PC-9 (cell line): ENCODE measurements at regions of chr7 and their contacts with region 1.

Region 1: DNA sequence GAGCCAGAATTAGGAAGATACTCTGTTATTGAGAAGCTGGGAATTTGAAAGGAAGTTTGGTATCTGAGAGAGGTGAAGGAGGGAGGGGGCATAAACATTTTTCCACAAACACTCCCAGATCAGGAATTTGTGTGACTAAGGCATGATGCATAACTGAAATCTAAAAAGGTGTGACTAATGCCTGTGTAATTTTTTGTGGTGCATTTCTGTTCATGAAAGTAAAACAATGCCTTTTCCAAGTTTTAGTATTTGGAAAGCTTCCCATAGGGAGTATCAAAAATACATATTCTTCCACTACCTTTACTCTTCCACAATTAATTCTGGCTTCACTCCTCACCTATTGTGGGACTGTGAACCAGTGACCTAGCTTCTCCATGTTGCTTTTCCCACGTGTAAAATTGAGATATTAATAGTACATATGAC is 56.4 kb upstream of the CAV2 start:
- DNase-seq: peak; percentile 46 to 95
- H3K4me3 ChIP-seq: peak overlapping the region; percentile 65; the same call in 1 of the 2 replicates
- H3K27ac ChIP-seq: peak overlapping the region; percentile 100
- H3K4me1 ChIP-seq: peaks cover 58% of the 10 kb centered on the region
- H3K27me3 ChIP-seq: no peaks in the 10 kb centered on the region
- CTCF ChIP-seq: no peak

Region 2: DNA sequence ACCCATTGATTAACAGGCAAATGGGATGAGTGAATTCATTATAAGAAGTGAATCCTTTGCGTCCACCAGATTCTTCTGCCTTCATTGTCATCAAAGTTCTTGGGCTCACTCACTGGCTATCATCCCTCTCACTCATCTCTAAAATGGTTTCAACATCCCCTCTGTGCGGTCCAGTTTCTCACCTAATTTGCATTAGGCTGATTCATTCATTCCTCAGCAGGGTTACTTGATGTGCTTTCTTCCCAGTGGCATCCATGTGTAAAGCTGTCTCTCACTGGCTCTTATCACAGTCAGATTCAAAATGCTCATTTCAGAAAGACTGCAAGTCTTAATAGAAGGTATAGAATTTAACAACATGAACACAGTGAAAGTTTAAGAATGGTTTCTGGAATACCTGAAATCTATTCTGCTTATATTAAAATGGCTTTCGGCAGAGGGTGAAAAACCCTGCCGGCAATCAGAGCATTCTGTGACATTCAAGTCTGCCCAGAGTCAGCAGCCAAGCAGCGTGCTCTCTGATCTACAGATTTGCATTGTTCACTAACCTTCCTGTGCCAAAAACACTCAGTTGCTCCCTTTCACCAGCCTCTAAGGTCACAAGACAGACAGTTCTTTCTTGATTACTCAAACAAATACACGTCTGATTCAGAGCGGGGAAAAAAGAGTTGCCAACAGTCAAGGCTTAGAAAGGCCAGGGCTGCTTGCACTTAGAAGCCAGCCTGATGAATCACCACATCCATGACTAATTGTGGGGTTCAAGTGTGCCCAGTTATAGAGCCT is 126.1 kb before region 1 on chr7:
- CTCF ChIA-PET with region 1: no interaction called
- POLR2A ChIA-PET with region 1: interaction called, 13 read pairs
- intact Hi-C with region 1: loop called (anchors 1 kb)
- DNase-seq: peak; percentile 76 to 97
- H3K4me3 ChIP-seq: peak overlapping the region; percentile 29; the same call in 1 of the 2 replicates
- H3K27ac ChIP-seq: peak overlapping the region; percentile 88
- H3K4me1 ChIP-seq: peaks cover 31% of the 10 kb centered on the region
- H3K27me3 ChIP-seq: no peaks in the 10 kb centered on the region
- CTCF ChIP-seq: no peak

Region 3: GRCh38 chr7:116426428-116427156 is 16.5 kb before region 1 on chr7:
- CTCF ChIA-PET with region 1: no interaction called
- POLR2A ChIA-PET with region 1: interaction called, 9 read pairs
- intact Hi-C with region 1: loop called (anchors 1 kb)
- DNase-seq: peak; percentile 56 to 91
- H3K4me3 ChIP-seq: no peak overlapping the region
- H3K27ac ChIP-seq: peak overlapping the region; percentile 59
- H3K4me1 ChIP-seq: peaks cover 26% of the 10 kb centered on the region
- H3K27me3 ChIP-seq: no peaks in the 10 kb centered on the region
- CTCF ChIP-seq: no peak

Region 4: GRCh38 chr7:116461500-116461899 is 18.4 kb after region 1 on chr7:
- CTCF ChIA-PET with region 1: no interaction called
- POLR2A ChIA-PET with region 1: interaction called, 36 read pairs
- intact Hi-C with region 1: loop called (anchors 2 kb)
- DNase-seq: no peak
- H3K4me3 ChIP-seq: no peak overlapping the region
- H3K27ac ChIP-seq: no peak overlapping the region
- H3K4me1 ChIP-seq: peaks cover 26% of the 10 kb centered on the region
- H3K27me3 ChIP-seq: no peaks in the 10 kb centered on the region
- CTCF ChIP-seq: no peak

Region 5: DNA sequence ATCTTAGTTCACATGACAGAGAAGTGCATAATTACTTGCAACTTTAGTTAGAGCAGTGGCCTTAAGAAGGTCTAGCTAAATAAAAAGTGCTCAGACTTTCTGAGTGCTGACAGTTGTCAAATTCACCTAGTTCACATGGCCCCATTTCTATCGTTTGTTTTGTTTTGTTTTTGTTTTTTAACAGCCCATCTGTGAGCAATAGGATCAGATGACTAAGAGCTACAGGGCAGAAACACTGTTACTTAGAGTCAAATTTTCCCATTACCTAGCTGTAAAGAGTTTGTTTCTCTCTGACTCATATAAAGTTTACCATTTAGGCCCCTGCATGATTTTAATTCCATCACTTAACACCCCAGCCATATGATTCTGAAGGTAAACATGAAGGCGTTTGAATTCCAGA is 100.6 kb after region 1 on chr7:
- CTCF ChIA-PET with region 1: no interaction called
- POLR2A ChIA-PET with region 1: interaction called, 13 read pairs
- intact Hi-C with region 1: no loop called
- DNase-seq: no peak
- H3K4me3 ChIP-seq: no peak overlapping the region
- H3K27ac ChIP-seq: no peak overlapping the region
- H3K4me1 ChIP-seq: no peaks in the 10 kb centered on the region
- H3K27me3 ChIP-seq: no peaks in the 10 kb centered on the region
- CTCF ChIP-seq: no peak

Region 6: GRCh38 chr7:117375380-117375779 is 932.3 kb after region 1 on chr7:
- CTCF ChIA-PET with region 1: no interaction called
- POLR2A ChIA-PET with region 1: no interaction called
- intact Hi-C with region 1: no loop called
- DNase-seq: no peak
- H3K4me3 ChIP-seq: no peak overlapping the region
- H3K27ac ChIP-seq: no peak overlapping the region
- H3K4me1 ChIP-seq: no peaks in the 10 kb centered on the region
- H3K27me3 ChIP-seq: no peaks in the 10 kb centered on the region
- CTCF ChIP-seq: no peak; the same call in 1 of the 2 replicates